Left cardiac atrium (tissue), 4 donors: ENCODE measurements at regions of chr22 and their contacts with region 1.

Region 1: DNA sequence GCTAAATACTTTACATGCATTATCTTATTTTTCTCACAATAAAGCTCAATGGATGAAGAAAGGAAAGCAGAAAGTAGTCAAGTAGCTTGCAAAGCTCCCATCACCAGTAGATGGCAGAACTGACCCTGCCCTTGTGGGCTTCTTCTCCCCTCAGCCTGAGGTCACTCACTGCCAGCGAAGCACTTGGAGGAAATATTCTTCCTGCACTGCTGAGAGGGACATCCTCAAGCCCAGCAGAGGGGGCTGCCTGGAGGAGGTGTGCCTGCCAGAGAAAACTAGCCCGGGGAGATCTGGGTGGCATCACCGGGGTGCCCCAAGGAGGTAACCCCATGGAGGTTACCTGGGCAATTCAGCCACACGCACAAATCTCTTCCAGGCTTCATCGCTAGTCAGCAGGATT is 6.6 kb downstream of the APOL4 start:
- DNase-seq: peak; percentile 61
- ATAC-seq: peak; percentile 54 to 67

Region 2: DNA sequence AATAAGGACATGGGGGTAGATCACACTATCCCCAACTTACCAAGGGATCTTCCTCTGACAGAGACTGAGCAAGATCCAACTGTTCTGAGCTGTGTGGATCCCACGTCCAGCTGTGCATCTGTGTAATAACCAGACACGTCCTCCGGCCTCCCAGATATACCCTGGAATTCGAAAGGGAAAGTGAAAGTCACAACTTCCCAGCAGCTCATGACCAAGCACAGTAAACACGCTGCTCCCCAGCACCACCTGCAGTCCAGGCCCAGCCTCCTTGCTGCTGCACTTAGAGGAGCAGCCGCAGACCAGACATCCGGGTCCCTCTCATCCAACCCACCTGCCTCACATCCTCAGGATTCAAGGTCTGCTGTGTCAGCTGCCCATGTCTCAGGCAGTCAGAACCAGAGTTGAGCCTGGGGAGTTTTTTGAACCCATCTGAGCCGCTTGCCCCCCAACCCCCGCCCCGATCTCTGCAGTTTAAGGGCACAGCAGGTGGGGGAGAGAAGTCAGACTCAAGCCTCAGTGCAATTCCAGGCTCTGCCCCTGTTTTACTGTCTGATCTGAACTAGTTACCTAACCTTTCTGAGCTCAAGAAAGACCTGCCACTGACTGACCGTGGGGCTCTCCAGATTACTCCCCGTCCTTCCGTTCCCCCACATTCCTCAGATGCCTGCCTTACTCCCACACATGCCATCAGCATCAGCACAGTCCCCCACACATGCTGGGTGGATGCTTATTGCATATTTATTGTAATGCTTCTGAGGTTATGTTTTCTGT is 44.6 kb after region 1 on chr22 and contains the start of gene APOL2:
- intact Hi-C with region 1: loop called in 1 of 2 experiments (anchors 5 kb)
- DNase-seq: peak; percentile 92
- ATAC-seq: peak; percentile 97
- total RNA-seq, gene APOL2: 43.8 to 43.9 TPM

Region 3: DNA sequence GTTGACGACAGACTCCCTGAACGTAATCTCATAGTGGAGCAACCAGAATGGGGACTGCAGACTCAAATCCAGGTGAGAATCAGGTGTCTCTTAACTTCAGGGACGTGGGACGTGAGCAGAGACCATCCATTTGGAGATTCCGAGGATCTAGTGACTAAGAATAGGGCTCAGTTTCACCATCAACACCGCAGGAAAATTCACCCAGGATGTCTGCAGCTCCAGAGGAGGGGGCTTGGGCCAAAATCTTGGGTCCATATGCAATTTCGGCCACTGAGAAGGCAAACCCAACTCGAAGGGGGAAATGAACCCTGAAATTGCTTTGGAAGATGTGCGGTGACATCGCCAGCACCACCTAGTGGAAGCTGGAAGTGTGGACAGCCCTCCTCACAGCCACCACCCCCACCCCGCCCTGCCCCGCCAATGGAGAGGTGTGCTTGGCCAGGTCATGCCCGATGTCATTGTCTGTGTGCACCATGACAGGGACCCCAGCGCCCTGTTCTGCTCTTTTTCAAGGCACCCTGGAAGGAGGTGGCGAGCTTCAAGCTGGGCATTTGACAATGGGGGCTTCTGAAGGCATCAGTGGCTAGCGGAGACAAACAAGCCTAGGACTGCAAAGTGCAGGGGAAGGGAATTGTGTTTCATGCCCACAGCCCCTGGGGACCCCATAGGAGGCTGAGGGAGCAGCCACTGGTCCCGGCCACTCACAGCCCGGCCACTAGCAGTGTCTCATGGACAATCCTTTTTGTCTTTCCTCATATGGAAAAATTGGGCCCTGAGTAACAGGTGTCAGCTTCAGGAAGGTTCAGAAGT is 82.7 kb after region 1 on chr22:
- intact Hi-C with region 1: loop called (anchors 5 to 10 kb)
- DNase-seq: peak; percentile 66
- ATAC-seq: peak; percentile 67 to 75

Region 4: DNA sequence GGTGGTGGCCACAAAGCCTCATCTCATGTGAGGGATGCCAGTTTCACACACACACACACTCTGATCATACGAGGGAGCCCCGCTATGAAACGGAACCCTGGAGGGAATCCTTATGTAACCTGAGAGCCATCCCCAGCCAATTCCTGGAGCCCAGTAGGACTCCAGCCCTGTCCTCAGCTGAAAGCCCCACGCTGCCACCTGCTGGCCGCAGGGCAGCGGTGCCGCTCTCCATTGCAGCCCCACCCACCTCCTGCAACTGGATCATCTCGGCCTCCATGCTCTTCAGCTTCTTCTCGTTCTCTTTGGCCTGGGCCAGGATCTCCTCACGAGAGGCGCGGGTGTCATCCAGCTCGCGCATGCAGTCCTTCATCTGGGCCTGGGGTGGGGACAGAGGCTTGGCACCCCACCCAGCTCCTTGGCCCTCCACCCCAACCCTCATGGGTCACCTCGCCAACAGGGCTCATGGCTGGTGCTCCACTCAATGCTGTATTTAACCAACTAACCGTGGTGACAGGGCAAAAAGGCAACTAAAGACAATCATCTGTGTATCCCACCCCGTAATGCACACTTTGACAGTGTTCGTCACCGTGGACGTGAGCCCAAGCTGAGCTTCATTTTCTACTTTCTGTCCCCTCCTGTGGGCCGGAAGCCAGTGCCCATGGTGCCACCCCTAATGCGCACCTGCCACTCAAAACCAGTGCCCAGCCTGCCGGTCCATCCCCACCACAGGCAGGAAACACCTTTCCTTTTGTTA is 91.7 kb after region 1 on chr22:
- intact Hi-C with region 1: loop called in 1 of 2 experiments (anchors 10 kb)
- DNase-seq: peak; percentile 74
- ATAC-seq: peak; percentile 61 to 92

Region 5: GRCh38 chr22:36481393-36482168 is 286.6 kb after region 1 on chr22 and contains the start of gene TXN2:
- intact Hi-C with region 1: loop called in 1 of 2 experiments (anchors 10 kb)
- DNase-seq: peak; percentile 98
- ATAC-seq: peak; percentile 95 to 97
- total RNA-seq, gene TXN2: 91.5 to 96.8 TPM